ENCODE measurements at regions of chr1 and their contacts with region 1.

Region 1: DNA sequence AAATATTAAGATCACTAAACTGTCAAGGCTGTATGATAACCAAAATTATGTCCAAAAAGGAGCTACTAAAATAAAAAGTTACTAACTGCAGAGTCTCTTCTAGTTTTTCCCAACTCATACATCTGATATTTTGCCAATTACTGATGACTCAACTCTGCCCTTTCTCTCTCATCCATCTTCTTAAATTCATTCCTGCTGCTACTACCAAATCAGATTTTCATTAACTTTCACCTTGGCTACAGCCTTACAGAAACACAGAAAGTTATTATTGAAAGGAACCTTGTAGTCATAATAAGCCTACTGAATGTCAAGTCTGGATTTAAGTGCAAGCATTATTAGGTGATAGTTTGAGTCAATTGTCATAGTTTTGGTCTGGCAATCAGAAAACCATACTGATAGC is 273.1 kb downstream of the DPYD start:
- DNase-seq: no peak
- ATAC-seq: no peak
- H3K4me3 ChIP-seq: no peak overlapping the region
- H3K4me3 Mint-ChIP-seq: no peak overlapping the region
- H3K27ac ChIP-seq: no peak overlapping the region
- H3K27ac Mint-ChIP-seq: no peak overlapping the region
- H3K4me1 ChIP-seq: no peaks in the 10 kb centered on the region
- H3K4me1 Mint-ChIP-seq: no peaks in the 10 kb centered on the region
- H3K27me3 ChIP-seq: no peaks in the 10 kb centered on the region
- H3K27me3 Mint-ChIP-seq: no peaks in the 10 kb centered on the region
- CTCF ChIP-seq: no peak

Region 2: GRCh38 chr1:97668945-97669344 is 21.2 kb after region 1 on chr1:
- CTCF ChIA-PET with region 1: no interaction called
- POLR2A ChIA-PET with region 1: no interaction called
- intact Hi-C with region 1: loop called in 1 of 2 experiments (anchors 2 kb)
- DNase-seq: peak in 2 of 9 experiments; percentile 15 to 33
- ATAC-seq: no peak
- H3K4me3 ChIP-seq: no peak overlapping the region
- H3K4me3 Mint-ChIP-seq: no peak overlapping the region
- H3K27ac ChIP-seq: no peak overlapping the region
- H3K27ac Mint-ChIP-seq: no peak overlapping the region
- H3K4me1 ChIP-seq: no peaks in the 10 kb centered on the region
- H3K4me1 Mint-ChIP-seq: no peaks in the 10 kb centered on the region
- H3K27me3 ChIP-seq: no peaks in the 10 kb centered on the region
- H3K27me3 Mint-ChIP-seq: no peaks in the 10 kb centered on the region
- CTCF ChIP-seq: no peak

Measured in CD8-positive, alpha-beta T cell (primary cell).